ENCODE measurements at regions of chr2 and their contacts with region 1.

Region 1: GRCh38 chr2:25951071-25951547 is 31.2 kb downstream of the KIF3C start:
- DNase-seq: peak; percentile 61 to 69 (median 64)
- H3K4me3 ChIP-seq: no peak overlapping the region
- H3K4me3 Mint-ChIP-seq: peak overlapping the region in 1 of 8 donors; percentile 26
- H3K27ac ChIP-seq: no peak overlapping the region
- H3K27ac Mint-ChIP-seq: peak overlapping the region in 1 of 7 donors; percentile 18
- H3K4me1 ChIP-seq: no peaks in the 10 kb centered on the region
- H3K4me1 Mint-ChIP-seq: peaks cover 2 to 6% (median 3%) of the 10 kb centered on the region in 4 donors
- H3K27me3 ChIP-seq: no peaks in the 10 kb centered on the region
- H3K27me3 Mint-ChIP-seq: no peaks in the 10 kb centered on the region

Region 2: DNA sequence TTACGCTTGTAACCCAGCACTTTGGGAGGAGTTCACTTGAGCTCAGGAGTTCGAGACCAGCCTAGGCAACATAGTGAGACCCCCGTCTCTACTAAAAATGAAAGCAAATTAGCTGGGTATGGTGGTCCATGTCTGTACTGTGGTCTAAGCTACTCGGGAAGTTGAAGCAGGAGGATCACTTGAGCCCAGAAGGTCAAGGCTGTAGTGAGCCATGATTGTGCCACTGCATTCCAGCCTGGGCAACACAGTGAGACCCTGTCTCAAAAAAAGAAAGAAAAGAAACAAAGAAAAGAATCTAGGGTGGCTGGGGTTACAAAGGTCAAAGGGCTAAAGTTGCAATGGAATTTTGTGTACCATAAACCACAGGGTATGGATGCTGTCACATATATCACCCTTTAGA is 10.1 kb before region 1 on chr2:
- CTCF ChIA-PET with region 1: interaction called, 10 read pairs
- POLR2A ChIA-PET with region 1: no interaction called
- intact Hi-C with region 1: no loop called
- DNase-seq: no peak
- H3K4me3 ChIP-seq: no peak overlapping the region
- H3K4me3 Mint-ChIP-seq: no peak overlapping the region
- H3K27ac ChIP-seq: no peak overlapping the region
- H3K27ac Mint-ChIP-seq: no peak overlapping the region
- H3K4me1 ChIP-seq: no peaks in the 10 kb centered on the region
- H3K4me1 Mint-ChIP-seq: peaks cover 0 to 2% (median 0%) of the 10 kb centered on the region in 4 donors
- H3K27me3 ChIP-seq: no peaks in the 10 kb centered on the region
- H3K27me3 Mint-ChIP-seq: no peaks in the 10 kb centered on the region

Region 3: GRCh38 chr2:26144953-26145680 is 194.0 kb after region 1 on chr2:
- CTCF ChIA-PET with region 1: interaction called, 26 read pairs
- POLR2A ChIA-PET with region 1: no interaction called
- intact Hi-C with region 1: loop called (anchors 1 kb)
- DNase-seq: peak; percentile 47 to 58 (median 49)
- H3K4me3 ChIP-seq: no peak overlapping the region
- H3K4me3 Mint-ChIP-seq: no peak overlapping the region
- H3K27ac ChIP-seq: no peak overlapping the region
- H3K27ac Mint-ChIP-seq: no peak overlapping the region
- H3K4me1 ChIP-seq: no peaks in the 10 kb centered on the region
- H3K4me1 Mint-ChIP-seq: peaks cover 0 to 4% (median 2%) of the 10 kb centered on the region in 4 donors
- H3K27me3 ChIP-seq: peaks cover 6% of the 10 kb centered on the region
- H3K27me3 Mint-ChIP-seq: peaks cover 9 to 10% of the 10 kb centered on the region in 2 donors

Region 4: DNA sequence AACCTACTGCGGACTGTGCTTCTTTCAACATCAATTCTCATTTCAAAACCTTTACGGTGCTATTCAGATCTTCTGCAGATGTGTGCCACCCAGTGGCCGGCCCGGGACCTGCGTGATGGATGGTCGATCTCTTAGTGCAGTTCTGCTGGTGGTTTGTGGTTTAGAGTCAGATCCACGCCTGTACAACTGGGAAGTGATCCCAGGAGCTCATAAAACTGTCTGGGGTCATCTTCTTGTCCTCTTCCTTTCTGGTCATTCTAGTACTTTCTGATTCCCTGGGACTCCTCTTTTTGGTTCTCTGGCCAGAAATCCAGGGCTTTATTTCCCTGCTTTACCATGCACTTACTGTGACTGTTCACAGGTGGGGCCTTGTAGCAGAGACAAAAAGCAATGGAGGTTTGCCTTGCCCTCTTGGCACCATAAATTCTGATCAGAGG is 379.0 kb after region 1 on chr2:
- CTCF ChIA-PET with region 1: interaction called, 6 read pairs
- POLR2A ChIA-PET with region 1: no interaction called
- intact Hi-C with region 1: loop called (anchors 1 kb)
- DNase-seq: peak; percentile 71 to 81 (median 73)
- H3K4me3 ChIP-seq: no peak overlapping the region
- H3K4me3 Mint-ChIP-seq: peak overlapping the region in 1 of 8 donors; percentile 60
- H3K27ac ChIP-seq: no peak overlapping the region
- H3K27ac Mint-ChIP-seq: peak overlapping the region in 2 of 7 donors; percentile 24 to 31
- H3K4me1 ChIP-seq: peaks cover 8% of the 10 kb centered on the region
- H3K4me1 Mint-ChIP-seq: peaks cover 6 to 10% (median 8%) of the 10 kb centered on the region in 4 donors
- H3K27me3 ChIP-seq: no peaks in the 10 kb centered on the region
- H3K27me3 Mint-ChIP-seq: no peaks in the 10 kb centered on the region

Measured in CD4-positive, alpha-beta memory T cell (primary cell).